ENCODE measurements at regions of chr2 and their contacts with region 1.

Region 1: GRCh38 chr2:168346725-168347477 is 99.5 kb upstream of the STK39 start:
- DNase-seq: peak in 3 of 4 donors; percentile 60 to 81 (median 72)
- ATAC-seq: peak; percentile 95
- H3K4me3 ChIP-seq: peak overlapping the region; percentile 24 to 32
- H3K27ac ChIP-seq: no peak overlapping the region
- H3K4me1 ChIP-seq: peaks cover 0 to 4% of the 10 kb centered on the region in 2 donors
- H3K27me3 ChIP-seq: peaks cover 0 to 6% of the 10 kb centered on the region in 2 donors
- CTCF ChIP-seq: peak; percentile 76 to 79

Region 2: DNA sequence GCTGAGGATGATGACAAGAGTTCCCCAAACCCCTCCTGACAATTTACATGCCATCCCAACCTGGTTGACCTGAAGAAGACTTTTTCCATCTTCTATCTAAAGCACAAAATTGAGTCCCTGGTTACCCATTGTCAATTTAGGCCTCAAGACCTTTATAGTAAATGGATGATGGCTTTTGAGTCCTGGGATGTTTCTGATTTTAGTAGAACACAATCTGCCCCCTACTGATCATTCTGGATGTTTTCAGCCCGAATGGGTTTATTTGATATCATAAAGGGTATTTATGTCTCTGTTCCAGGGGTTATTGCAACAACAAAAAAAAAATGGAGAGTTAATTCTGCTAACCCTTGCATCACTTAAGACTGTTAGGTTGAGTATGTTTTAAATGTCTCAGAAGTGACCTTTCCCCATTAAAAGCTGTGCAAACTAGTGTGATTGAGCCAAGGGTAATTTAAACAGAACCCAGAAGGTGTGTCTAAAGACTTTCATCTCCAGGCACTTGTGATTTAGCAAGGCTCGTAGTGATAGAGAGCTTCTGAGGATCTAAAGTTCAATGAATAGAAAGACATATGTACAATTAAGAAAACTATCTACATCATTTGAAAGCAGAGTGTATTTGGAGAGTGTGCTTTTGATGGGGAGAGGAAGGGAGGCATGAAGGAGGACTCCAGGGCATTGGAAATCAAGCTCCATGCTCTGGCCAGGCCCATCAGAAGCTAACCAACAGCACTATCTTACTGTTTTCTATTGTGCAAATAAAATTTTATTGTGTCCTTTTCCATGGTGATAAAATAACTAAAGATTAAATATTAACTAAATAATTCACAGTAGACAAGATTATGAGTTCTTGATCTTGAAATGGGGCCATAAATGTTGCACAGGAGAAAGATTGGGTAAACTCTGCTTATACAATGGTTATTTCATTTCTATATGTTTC is 358.9 kb after region 1 on chr2:
- intact Hi-C with region 1: loop called in 1 of 2 experiments (anchors 10 kb)
- DNase-seq: no peak
- ATAC-seq: peak; percentile 58
- H3K4me3 ChIP-seq: no peak overlapping the region
- H3K27ac ChIP-seq: no peak overlapping the region
- H3K4me1 ChIP-seq: no peaks in the 10 kb centered on the region
- H3K27me3 ChIP-seq: no peaks in the 10 kb centered on the region
- CTCF ChIP-seq: peak in 1 of 2 donors; percentile 30

Region 3: DNA sequence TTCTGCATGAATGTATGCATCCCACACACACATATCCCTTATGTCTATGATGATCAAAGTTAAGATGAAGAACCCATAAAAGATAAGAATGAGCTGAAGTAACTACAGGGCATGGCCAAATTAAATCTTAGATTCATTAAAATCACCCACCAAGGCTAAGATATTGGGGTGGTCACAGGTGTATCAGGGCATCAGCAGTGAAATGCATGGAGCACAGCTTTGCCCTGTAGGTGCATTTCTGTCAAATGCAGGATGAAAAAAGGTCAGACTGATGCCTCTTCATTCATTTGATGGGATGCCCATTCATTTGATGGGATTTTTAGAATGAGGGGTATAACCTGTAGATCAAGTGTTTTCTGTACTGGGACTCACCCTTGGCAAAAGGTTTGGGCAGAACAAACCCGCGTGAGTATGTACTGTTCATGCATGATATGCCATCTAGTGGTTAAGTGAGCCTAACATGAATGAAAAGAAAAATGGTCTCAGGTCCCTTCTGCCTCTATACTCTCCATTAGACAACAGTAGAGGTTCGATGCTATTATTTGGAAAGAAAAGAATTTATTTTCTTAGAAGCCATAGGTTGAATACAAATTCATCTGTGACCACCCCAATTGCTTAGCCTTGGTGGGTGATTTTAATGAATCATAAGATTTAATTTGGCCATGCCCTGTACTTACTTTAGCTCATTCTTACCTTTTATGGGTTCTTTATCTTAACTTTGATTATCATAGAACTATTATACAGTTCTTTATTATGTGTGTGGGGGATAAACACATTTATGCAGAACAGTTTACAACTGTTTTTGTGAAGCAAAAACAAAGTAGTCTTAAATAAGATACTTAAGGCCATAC is 412.3 kb after region 1 on chr2:
- intact Hi-C with region 1: loop called in 1 of 2 experiments (anchors 5 kb)
- DNase-seq: peak in 2 of 4 donors; percentile 30 to 61
- ATAC-seq: peak; percentile 91
- H3K4me3 ChIP-seq: no peak overlapping the region
- H3K27ac ChIP-seq: no peak overlapping the region
- H3K4me1 ChIP-seq: peaks cover 0 to 11% of the 10 kb centered on the region in 2 donors
- H3K27me3 ChIP-seq: no peaks in the 10 kb centered on the region
- CTCF ChIP-seq: peak; percentile 39 to 49

Region 4: GRCh38 chr2:168920504-168921157 is 573.7 kb after region 1 on chr2:
- intact Hi-C with region 1: loop called in 1 of 2 experiments (anchors 5 kb)
- DNase-seq: peak in 2 of 4 donors; percentile 13 to 19
- ATAC-seq: peak; percentile 69
- H3K4me3 ChIP-seq: no peak overlapping the region
- H3K27ac ChIP-seq: no peak overlapping the region
- H3K4me1 ChIP-seq: no peaks in the 10 kb centered on the region
- H3K27me3 ChIP-seq: no peaks in the 10 kb centered on the region
- CTCF ChIP-seq: peak in 1 of 2 donors; percentile 48